SK-N-SH (cell line): ENCODE measurements at regions of chr19 and their contacts with region 1.

Region 1: DNA sequence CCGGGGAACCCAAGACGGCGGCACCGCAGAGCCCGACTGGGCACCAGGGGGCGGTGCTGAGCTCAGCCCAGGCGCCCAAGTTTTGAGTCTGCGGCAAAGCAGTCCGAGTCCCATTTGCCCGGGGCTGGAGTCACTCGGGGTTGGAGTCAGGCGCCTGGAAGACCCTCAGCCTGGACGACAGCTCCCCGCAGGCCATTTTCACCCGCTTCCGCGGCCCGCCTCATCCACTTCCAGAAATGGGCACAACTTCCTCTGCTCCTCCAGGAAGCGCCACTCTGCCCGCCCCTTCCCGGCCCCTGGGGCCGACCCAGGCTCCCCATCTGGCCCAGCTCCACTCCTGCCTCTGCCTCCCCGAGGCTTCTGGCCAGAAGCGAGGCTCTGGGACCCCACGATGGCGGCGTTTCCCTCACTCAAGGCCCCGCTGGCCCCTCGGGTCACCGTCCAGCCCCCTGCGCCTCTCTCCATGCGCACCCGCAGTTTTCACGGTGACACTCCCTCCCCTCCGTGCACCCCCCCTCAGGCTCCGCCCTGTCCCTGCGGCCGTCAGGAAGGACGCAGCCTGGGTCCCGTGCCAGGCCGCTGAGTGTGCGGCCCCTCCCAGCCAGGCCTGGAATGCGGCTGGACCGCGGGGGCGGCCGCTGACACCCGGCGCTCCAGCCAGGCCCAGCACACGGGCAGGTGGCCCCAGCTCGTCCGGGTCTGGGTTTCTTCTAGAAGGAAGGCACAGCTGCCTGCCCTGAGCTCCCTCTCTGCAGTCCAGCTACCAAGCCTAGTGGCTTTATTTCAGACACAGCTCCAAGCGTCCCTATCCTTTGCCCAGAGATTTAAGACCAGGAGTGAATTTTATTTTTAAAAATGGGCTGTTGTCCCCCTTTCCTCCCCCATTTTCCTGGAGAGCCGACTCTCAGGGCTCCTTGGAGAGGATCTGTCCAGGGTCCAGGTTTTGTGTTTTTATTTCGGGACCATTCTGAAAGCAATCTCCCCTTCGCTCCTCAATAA is 4.7 kb downstream of the SERTAD1 start:
- DNase-seq: peak; percentile 91
- H3K4me3 ChIP-seq: peak overlapping the region; percentile 52 to 67
- H3K27ac ChIP-seq: peak overlapping the region; percentile 92 to 97
- H3K4me1 ChIP-seq: peaks cover 6 to 17% of the 10 kb centered on the region in 2 experiments; a peak in 3 of 4 replicates
- H3K27me3 ChIP-seq: no peaks in the 10 kb centered on the region
- CTCF ChIP-seq: peak; percentile 97
- EP300 ChIP-seq: peak in 1 of 2 experiments; percentile 48; a peak in 1 of 4 replicates
- RAD21 ChIP-seq: peak; percentile 59

Region 2: DNA sequence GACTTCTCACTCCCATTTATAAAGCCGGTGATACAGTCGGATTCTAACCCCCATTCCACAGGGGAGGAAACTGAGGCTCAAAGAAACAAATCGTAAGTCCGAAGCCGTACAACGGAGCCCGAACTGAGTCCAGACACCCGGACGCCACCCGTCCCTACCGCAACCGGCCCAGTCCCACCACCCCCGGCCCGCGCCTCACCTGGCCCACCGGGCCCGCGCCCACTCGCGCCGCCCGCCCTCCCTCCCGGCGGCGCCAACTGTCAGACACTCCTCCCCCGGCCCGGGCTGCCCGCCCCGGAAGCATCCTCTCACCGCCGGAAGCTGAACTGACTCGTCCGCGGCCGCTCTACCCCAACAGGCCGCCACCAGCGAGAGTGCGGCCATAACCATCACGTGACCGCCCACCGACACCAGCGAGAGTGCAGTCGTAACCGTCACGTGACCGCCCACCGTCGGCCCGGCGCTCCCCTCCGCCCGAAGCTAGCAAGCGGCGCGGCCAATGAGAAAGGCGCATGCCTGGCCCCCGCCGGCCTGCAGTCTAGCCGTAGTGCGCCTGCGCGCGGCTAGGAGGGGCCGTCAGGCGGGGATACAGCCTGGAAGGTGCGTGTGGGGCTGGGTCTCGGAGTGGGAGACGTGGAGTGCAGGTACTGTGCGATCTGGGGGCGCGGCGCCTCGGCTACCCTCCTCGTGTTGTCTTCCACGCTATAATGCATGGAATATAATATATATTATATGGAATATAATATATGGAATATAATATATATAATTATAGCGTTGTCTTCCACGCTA is 72.7 kb before region 1 on chr19 and contains the starts of genes C19orf47 and PLD3:
- CTCF ChIA-PET with region 1: interaction called, 10 read pairs
- POLR2A ChIA-PET with region 1: no interaction called
- DNase-seq: peak; percentile 100
- H3K4me3 ChIP-seq: peak within 1 kb of the TSS; percentile 68 to 94
- H3K27ac ChIP-seq: peak within 1 kb of the TSS; percentile 50 to 59; a peak in 2 of 4 replicates
- H3K4me1 ChIP-seq: peaks cover 0 to 7% of the 10 kb centered on the region in 2 experiments; a peak in 1 of 4 replicates
- H3K27me3 ChIP-seq: no peaks in the 10 kb centered on the region
- CTCF ChIP-seq: no peak
- EP300 ChIP-seq: no peak
- RAD21 ChIP-seq: no peak
- polyA plus RNA-seq, gene C19orf47: 13.9 and 17.2 TPM in 2 replicates
- polyA plus RNA-seq, gene PLD3: 449 and 511 TPM in 2 replicates

Region 3: DNA sequence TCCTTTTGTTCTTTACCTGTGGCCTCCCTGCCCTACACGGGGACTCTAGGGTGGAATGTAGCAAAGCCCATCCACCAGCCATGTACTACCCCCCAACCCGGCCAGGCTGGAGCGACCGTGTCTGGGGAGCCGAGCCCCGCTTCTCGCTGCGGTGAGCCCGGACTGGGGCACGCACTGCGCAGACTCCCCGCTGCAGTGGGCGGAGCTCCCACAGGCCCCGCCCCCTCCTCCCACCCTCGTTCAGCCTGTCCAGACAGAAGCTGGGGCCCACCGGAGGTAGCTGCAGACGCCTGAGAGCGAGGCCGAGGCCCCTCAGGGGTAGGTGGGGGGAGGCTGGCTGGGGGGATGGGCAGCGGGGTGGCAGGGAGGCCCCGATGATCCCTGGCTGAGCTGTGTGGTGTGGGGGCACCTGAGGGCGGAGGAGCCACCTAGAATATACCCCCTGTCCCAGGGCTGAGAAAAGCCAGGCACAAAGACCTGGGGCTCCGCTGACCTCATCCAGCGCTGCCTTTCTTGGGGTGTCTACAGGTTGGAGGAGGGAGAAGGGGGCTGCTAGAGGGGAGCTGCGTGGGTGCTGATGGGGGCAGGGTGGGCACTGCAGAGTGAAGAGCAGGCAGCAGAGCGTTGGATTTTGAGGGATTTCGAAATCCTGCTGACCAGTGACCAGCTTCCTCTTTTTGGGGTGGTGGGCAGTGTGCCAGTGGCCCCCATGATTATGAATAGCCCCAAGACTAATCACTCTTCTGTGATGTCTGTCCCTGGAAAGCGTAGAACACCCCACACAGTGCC is 55.3 kb before region 1 on chr19:
- CTCF ChIA-PET with region 1: interaction called, 6 read pairs
- POLR2A ChIA-PET with region 1: interaction called, 10 read pairs
- DNase-seq: peak; percentile 99
- H3K4me3 ChIP-seq: peak overlapping the region; percentile 49 to 66
- H3K27ac ChIP-seq: peak overlapping the region in 1 of 2 experiments; percentile 70; a peak in 2 of 4 replicates
- H3K4me1 ChIP-seq: peaks cover 0 to 14% of the 10 kb centered on the region in 2 experiments; a peak in 2 of 4 replicates
- H3K27me3 ChIP-seq: no peaks in the 10 kb centered on the region
- CTCF ChIP-seq: no peak
- EP300 ChIP-seq: no peak
- RAD21 ChIP-seq: no peak

Region 4: DNA sequence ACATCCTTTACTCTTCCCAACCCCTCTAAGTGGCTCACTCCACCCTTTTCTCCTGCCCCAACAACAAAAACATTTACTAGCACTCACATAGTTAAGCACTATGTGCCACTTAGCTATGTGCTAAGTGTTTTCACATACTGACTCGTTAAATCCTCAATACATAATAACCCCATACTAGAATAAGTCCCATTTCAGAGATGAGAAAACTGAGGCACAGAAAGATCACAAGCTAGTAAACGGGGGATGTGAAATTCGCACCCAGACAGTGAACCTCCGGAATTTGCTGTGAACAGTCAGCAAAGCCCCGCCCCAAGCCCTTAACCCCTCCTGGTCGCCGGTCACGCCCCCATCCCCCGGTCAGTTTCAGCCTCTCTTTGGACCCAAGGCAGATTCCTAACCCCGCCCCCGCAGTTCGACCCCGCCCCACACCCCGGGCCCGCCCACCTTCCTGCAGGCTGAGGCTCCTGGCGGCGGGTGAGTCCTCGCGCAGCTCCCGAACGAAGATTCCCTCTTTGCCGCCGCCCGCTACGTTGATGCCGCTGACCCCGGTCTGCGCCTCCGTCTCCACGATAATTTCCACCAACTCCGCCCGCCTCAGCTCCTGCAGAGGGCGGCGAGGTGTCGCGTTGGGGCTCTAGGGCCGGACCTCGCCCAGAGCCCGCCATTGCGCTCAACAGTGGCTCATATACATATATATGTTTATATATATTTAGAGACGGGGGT is 17.6 kb before region 1 on chr19:
- CTCF ChIA-PET with region 1: interaction called, 27 read pairs
- POLR2A ChIA-PET with region 1: interaction called, 6 read pairs
- DNase-seq: peak; percentile 98
- H3K4me3 ChIP-seq: peak overlapping the region; percentile 55 to 80
- H3K27ac ChIP-seq: peak overlapping the region; percentile 58 to 78; a peak in 3 of 4 replicates
- H3K4me1 ChIP-seq: no peaks in the 10 kb centered on the region; a peak in 1 of 4 replicates
- H3K27me3 ChIP-seq: no peaks in the 10 kb centered on the region
- CTCF ChIP-seq: no peak; the same call in 1 of the 2 replicates
- EP300 ChIP-seq: no peak
- RAD21 ChIP-seq: no peak

Region 5: DNA sequence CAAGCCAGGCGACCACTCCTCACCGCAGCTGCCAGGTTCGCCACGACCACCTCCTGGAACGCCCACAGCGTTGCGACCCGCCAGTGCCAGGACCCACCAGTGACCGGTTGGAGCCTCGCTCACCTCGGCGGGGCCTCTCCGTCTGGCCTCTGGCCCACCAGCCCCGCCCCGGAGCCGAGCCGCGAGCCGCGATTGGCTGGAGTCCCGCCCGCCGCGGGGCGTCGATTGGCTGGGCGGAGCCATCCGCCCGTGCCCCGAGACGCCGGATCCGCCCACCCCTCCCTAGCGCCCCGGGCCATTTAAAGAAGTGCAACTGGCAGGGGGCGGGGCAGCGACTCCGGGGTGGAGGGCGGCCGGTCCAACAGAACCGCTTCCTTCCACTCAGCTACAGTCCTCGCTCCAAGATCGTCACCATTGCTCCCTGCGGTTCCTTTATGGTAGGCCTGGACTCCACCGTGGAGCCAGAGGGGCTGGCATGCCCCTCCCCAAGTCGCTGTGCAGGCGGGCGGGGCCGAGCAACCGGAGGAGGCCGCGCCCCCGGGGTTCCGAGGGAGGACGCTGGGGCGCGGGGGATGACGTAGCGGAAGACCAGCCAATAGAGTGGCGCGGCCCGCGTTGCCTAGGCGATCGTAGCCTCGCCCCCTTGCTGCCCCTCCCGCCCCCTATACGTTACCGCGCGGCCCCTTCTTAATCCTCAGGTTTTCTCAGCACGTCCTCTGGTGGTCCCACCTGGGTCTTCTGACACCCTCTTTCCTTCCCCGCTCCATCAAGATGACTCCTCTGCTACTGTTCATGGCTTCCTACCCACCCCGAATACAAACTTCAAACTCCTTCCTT is 23.3 kb after region 1 on chr19 and contains the start of gene SERTAD3:
- CTCF ChIA-PET with region 1: interaction called, 16 read pairs
- POLR2A ChIA-PET with region 1: interaction called, 17 read pairs
- DNase-seq: peak; percentile 96
- H3K4me3 ChIP-seq: peak within 1 kb of the TSS; percentile 88 to 100
- H3K27ac ChIP-seq: peak within 1 kb of the TSS; percentile 96
- H3K4me1 ChIP-seq: peaks cover 5 to 8% of the 10 kb centered on the region in 2 experiments; a peak in 2 of 4 replicates
- H3K27me3 ChIP-seq: no peaks in the 10 kb centered on the region
- CTCF ChIP-seq: peak; percentile 40; the same call in 1 of the 2 replicates
- EP300 ChIP-seq: peak in 1 of 2 experiments; percentile 7; a peak in 1 of 4 replicates
- RAD21 ChIP-seq: peak; percentile 68
- polyA plus RNA-seq, gene SERTAD3: 11.3 and 12.9 TPM in 2 replicates